OCI-LY7 (cell line): ENCODE measurements at regions of chr17 and their contacts with region 1.

Region 1: DNA sequence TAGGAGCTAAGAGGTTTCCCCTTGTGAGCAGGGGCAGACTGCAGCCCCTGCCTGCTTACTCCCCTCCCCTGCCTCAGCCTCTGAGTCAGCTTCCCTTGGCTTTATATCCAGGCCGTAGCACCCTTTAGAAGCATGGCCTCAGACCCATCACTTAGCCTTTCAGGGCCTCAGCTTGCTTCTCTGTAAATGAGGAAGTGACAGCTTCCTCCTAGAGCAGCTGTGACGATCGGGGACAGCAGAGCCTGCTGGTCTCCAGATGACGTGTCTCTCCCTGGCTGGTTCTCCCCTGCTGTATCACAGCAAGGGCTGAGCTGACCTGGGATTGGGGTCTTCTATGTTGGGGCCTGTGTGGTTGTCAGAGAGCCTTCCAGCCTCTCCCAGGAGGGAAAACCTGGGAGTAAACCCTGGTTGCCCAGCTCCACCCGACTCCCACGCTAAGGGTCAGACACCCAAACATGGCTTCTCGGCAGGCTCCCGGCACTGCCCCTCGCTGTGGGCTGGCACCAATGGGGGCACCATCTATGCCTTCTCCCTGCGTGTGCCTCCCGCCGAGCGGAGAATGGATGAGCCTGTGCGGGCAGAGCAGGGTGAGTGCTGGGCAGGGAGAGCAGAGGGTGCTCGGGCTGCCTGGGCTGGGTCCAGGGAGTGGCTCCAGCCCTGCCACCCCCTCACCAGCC is 16.3 kb upstream of the MYO15B start:
- DNase-seq: peak; percentile 97
- H3K4me3 ChIP-seq: peak overlapping the region; percentile 28
- H3K27ac ChIP-seq: peak overlapping the region; percentile 61
- H3K4me1 ChIP-seq: peaks cover 40% of the 10 kb centered on the region
- CTCF ChIP-seq: no peak

Region 2: DNA sequence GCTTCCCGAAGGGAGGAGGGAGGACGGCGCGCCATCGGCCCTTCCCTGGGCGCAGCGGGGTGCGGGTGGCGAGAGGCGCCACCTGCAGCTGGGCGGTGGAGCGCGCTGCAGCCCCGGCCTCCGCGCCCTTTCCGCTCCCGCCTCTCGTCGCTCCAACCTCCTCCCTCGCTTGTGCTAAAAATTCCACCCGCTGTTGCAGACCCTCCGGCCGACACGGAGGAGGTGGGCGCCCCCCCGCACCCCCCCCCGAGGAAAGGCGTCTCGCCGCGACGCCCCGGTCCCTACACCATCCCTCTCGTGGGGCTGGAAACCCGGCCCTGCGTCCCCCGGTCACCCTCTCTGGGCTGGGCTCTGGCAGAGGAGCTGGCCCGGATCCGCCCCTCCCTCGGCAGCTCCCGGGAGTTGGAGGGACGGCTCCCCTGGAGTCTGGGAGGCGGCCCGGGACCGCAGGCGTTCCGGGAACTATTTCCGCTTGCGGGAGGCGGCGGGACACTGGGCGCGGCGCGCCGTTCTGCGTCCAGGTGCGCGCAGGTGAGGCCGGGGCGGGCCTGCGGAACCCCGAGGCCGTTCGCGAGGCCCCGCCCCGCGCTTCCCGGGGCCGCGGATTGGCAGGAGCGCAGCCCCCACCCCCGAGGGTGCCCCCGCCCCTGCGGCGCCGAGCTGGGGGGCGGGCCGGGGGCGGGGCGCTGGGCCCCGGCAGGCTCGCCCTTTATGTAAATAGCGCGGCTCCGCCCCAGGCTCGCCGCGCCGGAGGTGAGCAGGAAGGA is 46.2 kb before region 1 on chr17 and contains the start of gene LLGL2:
- CTCF ChIA-PET with region 1: no interaction called
- POLR2A ChIA-PET with region 1: no interaction called
- intact Hi-C with region 1: loop called (anchors 2 kb)
- DNase-seq: peak; percentile 94
- H3K4me3 ChIP-seq: peak within 1 kb of the TSS; percentile 72
- H3K27ac ChIP-seq: peak within 1 kb of the TSS; percentile 12
- H3K4me1 ChIP-seq: peaks cover 19% of the 10 kb centered on the region
- CTCF ChIP-seq: peak; percentile 75
- total RNA-seq, gene LLGL2: 10.7 and 12.6 TPM in 2 replicates

Region 3: DNA sequence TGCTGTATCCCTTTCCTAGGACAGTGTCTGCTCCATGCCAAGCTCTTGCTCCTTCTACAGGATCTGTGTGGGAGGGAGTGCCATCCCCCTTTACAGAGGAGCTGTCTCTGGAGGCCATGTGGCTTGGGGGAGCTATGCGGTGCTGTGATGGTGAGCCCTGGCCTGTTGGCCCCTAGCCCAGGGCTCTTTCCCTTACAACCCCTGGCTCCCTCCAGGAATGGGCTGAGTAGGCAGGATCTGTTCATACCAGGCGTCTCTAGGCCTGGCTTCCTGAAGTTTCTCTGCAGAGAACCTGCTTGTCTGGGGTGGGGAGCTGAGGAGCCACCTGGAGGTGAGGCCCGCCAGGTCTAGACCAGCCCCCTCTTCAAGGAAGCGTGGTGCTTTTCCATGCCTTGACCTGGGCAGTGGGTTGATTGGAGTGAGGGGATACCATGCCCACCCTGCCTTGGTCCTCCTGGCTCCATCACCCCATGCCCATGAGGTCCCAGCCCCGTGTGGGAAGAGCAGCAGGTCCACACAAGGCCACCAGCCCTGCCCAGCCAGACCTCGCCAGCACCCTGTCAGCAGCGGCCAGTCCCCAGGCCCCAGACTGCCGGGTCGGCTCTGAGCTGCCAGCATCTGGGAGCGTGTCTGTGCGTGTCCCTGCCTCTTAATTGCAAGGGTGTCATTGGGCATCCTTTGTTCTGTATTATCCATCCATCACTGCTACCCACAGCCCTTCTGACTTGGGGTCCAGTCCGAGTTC is 31.2 kb before region 1 on chr17:
- CTCF ChIA-PET with region 1: no interaction called
- POLR2A ChIA-PET with region 1: no interaction called
- intact Hi-C with region 1: no loop called
- DNase-seq: no peak
- H3K4me3 ChIP-seq: no peak overlapping the region
- H3K27ac ChIP-seq: no peak overlapping the region
- H3K4me1 ChIP-seq: peaks cover 4% of the 10 kb centered on the region
- CTCF ChIP-seq: no peak

Region 4: DNA sequence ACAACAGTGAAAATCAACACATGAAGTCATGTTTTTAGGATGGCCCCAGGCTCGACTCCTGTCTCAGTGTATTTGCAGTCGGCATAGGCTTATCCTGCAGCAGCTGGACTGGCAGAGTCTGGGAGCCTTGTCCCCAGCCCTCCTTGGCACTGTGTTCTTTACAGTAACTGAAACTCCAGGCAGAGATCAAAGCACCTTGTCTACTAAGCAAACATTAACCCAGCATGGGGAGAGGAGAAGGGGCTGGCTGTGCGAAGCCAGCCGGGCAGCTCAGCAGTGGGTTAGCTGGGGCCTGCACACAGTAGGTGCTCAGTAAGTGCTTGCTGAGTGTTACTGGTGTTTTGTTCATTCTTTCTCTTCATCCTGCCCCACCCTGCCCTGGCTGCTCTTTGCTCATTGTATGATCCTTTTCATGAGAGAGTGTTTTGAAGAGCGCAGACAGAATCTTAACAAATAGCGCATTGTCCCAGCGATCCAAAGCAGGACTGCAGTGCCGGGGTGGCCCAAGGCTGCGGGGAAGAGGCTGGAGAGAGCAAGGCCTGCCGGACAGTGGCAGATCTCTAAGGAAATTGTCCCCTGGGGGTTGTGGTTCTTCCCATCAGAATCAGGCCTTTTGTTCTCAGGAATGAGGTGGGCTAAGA is 126.4 kb after region 1 on chr17:
- CTCF ChIA-PET with region 1: no interaction called
- POLR2A ChIA-PET with region 1: no interaction called
- intact Hi-C with region 1: no loop called
- DNase-seq: no peak
- H3K4me3 ChIP-seq: no peak overlapping the region
- H3K27ac ChIP-seq: no peak overlapping the region
- H3K4me1 ChIP-seq: no peaks in the 10 kb centered on the region
- CTCF ChIP-seq: no peak